CD4-positive, alpha-beta memory T cell (primary cell): ENCODE measurements at regions of chr17 and their contacts with region 1.

Region 1: GRCh38 chr17:3048767-3049471 is 14.5 kb downstream of the OR1D5 start:
- DNase-seq: peak; percentile 88 to 95 (median 93)
- H3K4me3 ChIP-seq: peak overlapping the region; percentile 66 to 94
- H3K4me3 Mint-ChIP-seq: peak overlapping the region; percentile 89 to 96 (median 94)
- H3K27ac ChIP-seq: peak overlapping the region; percentile 48
- H3K27ac Mint-ChIP-seq: peak overlapping the region; percentile 76 to 93 (median 91)
- H3K4me1 ChIP-seq: peaks cover 15% of the 10 kb centered on the region
- H3K4me1 Mint-ChIP-seq: peaks cover 0 to 14% (median 6%) of the 10 kb centered on the region in 4 donors
- H3K27me3 ChIP-seq: no peaks in the 10 kb centered on the region
- H3K27me3 Mint-ChIP-seq: no peaks in the 10 kb centered on the region

Region 2: DNA sequence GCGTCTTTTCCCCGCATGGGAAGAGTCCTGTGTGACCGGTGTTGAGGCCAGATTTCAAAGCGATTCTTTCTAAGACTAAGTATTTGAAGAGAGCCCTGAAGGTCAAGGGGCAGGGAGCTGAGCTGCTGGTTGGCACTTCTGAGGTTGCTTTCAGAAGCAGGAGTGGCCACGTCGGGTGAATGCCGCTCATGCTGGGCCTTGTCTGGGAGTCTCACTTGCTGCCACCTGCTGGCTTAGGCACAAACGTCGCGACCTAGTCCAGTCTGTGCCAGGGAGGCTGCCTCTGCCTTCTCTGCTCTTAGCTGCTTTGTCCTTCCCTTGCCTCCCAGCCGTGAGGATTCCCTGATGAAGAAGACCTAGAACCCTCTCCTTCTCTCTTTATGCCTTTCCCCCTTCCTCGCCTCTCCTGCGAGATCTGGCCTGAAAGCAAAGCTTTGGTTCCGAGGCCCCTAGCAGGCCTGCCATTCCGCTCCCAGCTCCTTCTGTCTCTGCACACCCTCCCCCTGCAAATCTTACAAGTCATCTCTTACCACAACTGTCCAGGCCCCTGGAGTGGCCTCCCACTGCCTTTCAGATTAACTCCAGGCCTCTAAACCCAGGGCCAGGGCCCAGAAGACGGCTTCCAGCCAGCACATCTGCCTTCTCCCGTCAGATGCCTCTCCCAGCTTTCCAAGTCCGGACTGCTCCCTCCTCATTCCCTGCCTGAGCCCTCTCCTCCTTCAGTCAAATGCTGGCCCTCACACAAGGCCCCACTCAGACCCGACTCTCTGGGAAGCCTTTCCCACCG is 599.0 kb after region 1 on chr17:
- CTCF ChIA-PET with region 1: interaction called, 3 read pairs
- POLR2A ChIA-PET with region 1: no interaction called
- intact Hi-C with region 1: loop called (anchors 5 kb)
- DNase-seq: peak in 3 of 5 donors; percentile 20 to 26 (median 21)
- H3K4me3 ChIP-seq: no peak overlapping the region
- H3K4me3 Mint-ChIP-seq: no peak overlapping the region
- H3K27ac ChIP-seq: no peak overlapping the region
- H3K27ac Mint-ChIP-seq: no peak overlapping the region
- H3K4me1 ChIP-seq: no peaks in the 10 kb centered on the region
- H3K4me1 Mint-ChIP-seq: peaks cover 0 to 3% (median 0%) of the 10 kb centered on the region in 4 donors
- H3K27me3 ChIP-seq: no peaks in the 10 kb centered on the region
- H3K27me3 Mint-ChIP-seq: no peaks in the 10 kb centered on the region